ENCODE measurements at regions of chr17 and their contacts with region 1.

Region 1: GRCh38 chr17:32444308-32445073 is at the start of gene PSMD11:
- DNase-seq: peak; percentile 99
- ATAC-seq: peak; percentile 98
- H3K4me3 Mint-ChIP-seq: peak within 1 kb of the TSS; percentile 82
- H3K27ac Mint-ChIP-seq: peak within 1 kb of the TSS; percentile 77
- H3K4me1 Mint-ChIP-seq: peaks cover 38% of the 10 kb centered on the region
- H3K27me3 Mint-ChIP-seq: peaks cover 17% of the 10 kb centered on the region
- total RNA-seq, gene PSMD11: 100 to 104 TPM

Region 2: GRCh38 chr17:32429598-32429997 is 14.9 kb before region 1 on chr17:
- CTCF ChIA-PET with region 1: interaction called, 13 read pairs
- POLR2A ChIA-PET with region 1: no interaction called
- DNase-seq: no peak
- ATAC-seq: no peak
- H3K4me3 Mint-ChIP-seq: no peak overlapping the region
- H3K27ac Mint-ChIP-seq: no peak overlapping the region
- H3K4me1 Mint-ChIP-seq: no peaks in the 10 kb centered on the region
- H3K27me3 Mint-ChIP-seq: no peaks in the 10 kb centered on the region

Region 3: GRCh38 chr17:32470405-32471167 is 26.1 kb after region 1 on chr17:
- CTCF ChIA-PET with region 1: interaction called, 10 read pairs
- POLR2A ChIA-PET with region 1: no interaction called
- DNase-seq: no peak
- ATAC-seq: no peak
- H3K4me3 Mint-ChIP-seq: no peak overlapping the region
- H3K27ac Mint-ChIP-seq: no peak overlapping the region
- H3K4me1 Mint-ChIP-seq: no peaks in the 10 kb centered on the region
- H3K27me3 Mint-ChIP-seq: no peaks in the 10 kb centered on the region

Region 4: GRCh38 chr17:32503251-32504165 is 59.0 kb after region 1 on chr17:
- CTCF ChIA-PET with region 1: no interaction called
- POLR2A ChIA-PET with region 1: no interaction called
- DNase-seq: peak; percentile 76
- ATAC-seq: peak; percentile 96
- H3K4me3 Mint-ChIP-seq: peak overlapping the region; percentile 69
- H3K27ac Mint-ChIP-seq: peak overlapping the region; percentile 100
- H3K4me1 Mint-ChIP-seq: peaks cover 39% of the 10 kb centered on the region
- H3K27me3 Mint-ChIP-seq: no peaks in the 10 kb centered on the region

Region 5: DNA sequence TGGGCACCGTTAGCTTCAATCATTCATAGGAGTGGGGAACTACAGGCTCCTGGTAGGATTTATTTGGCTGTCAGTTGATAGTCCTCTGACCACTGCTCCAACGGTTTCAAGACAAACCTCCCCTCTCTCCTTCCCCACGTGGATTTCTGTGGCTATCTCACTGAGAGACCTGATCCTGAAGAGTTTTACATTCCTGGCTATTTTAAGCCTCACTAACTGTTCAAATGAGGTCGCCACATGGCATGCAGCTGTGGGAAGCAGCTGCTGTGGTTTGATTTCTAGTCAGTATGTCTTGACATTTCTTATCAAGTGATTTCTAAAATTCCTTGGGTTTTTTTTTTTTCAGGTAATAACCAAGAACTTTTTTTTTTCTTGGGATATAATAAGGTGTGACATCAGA is 80.6 kb after region 1 on chr17:
- CTCF ChIA-PET with region 1: interaction called, 13 read pairs
- POLR2A ChIA-PET with region 1: interaction called, 4 read pairs
- DNase-seq: no peak
- ATAC-seq: no peak
- H3K4me3 Mint-ChIP-seq: no peak overlapping the region
- H3K27ac Mint-ChIP-seq: no peak overlapping the region
- H3K4me1 Mint-ChIP-seq: peaks cover 73% of the 10 kb centered on the region
- H3K27me3 Mint-ChIP-seq: no peaks in the 10 kb centered on the region

Measured in activated CD8-positive, alpha-beta T cell treated with anti-CD3 and anti-CD28 coated beads, Interleukin-2, amount 10 ng/mL, durations not matched to agents 7 days and 5 days (primary cell).